Heart left ventricle (tissue), 16 donors: ENCODE measurements at regions of chr22 and their contacts with region 1.

Region 1: GRCh38 chr22:33028234-33028633 is 29.9 kb downstream of the SYN3 start:
- DNase-seq: no peak
- ATAC-seq: no peak
- H3K4me3 ChIP-seq: no peak overlapping the region
- H3K27ac ChIP-seq: no peak overlapping the region
- H3K4me1 ChIP-seq: no peaks in the 10 kb centered on the region
- H3K27me3 ChIP-seq: peaks cover 0 to 25% (median 0%) of the 10 kb centered on the region in 9 donors
- CTCF ChIP-seq: no peak
- POLR2A ChIP-seq: no peak

Region 2: GRCh38 chr22:32880893-32881596 is 147.2 kb before region 1 on chr22:
- intact Hi-C with region 1: no loop called
- DNase-seq: peak; percentile 86 to 94 (median 92)
- ATAC-seq: peak; percentile 96 to 99 (median 98)
- H3K4me3 ChIP-seq: no peak overlapping the region
- H3K27ac ChIP-seq: peak overlapping the region in 11 of 12 donors; percentile 11 to 76 (median 49)
- H3K4me1 ChIP-seq: peaks cover 3 to 25% (median 13%) of the 10 kb centered on the region in 12 donors
- H3K27me3 ChIP-seq: no peaks in the 10 kb centered on the region
- CTCF ChIP-seq: no peak
- POLR2A ChIP-seq: no peak

Region 3: DNA sequence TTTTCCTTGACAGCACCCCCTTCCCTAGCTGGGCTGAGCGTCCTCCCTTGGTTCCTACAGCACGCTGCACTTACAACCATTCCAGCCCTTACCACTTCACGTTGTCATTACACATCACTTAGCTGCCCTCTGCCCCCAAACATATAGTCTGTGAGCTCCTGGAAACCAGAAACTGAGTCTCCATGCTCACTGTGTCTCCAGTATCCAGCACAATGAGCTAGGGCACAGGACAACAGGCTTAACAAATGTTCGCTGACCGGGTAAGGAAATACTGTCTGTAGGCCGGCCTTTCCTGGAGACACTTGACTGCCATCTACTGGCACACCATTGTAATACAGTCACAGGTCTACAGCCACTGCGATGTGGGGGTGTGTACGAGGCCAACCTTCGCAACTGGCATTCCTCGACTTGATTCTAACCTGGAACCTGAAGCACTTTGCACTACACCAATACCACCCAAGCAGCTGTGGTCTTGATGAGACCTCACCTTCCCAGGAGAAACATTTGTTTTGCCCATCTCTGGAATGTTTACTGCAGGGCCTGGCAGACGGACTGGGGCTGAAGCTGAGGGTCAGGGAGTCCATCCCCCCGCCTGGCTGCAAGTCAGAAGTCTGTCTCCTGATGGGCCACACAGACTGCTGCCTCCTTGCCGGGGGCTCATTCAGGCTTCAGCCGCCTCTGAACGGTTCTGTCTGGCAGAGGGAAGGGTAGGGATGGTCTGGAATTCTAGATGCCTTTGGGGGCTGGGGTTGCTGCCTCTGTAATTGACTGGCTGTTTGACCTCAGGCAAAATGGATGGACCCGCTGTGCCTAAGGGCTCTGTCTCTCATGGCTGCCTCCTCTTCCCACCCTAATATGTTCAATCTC is 42.1 kb before region 1 on chr22:
- intact Hi-C with region 1: no loop called
- DNase-seq: peak in 4 of 5 donors; percentile 73 to 82 (median 76)
- ATAC-seq: peak; percentile 87 to 99 (median 97)
- H3K4me3 ChIP-seq: no peak overlapping the region
- H3K27ac ChIP-seq: peak overlapping the region in 1 of 12 donors; percentile 35
- H3K4me1 ChIP-seq: peaks cover 0 to 10% (median 3%) of the 10 kb centered on the region in 12 donors
- H3K27me3 ChIP-seq: no peaks in the 10 kb centered on the region
- CTCF ChIP-seq: peak; percentile 84 to 95 (median 92)
- POLR2A ChIP-seq: no peak

Region 4: GRCh38 chr22:33049119-33049729 is 21.0 kb after region 1 on chr22:
- intact Hi-C with region 1: no loop called
- DNase-seq: peak in 4 of 5 donors; percentile 71 to 82 (median 75)
- ATAC-seq: peak in 3 of 4 donors; percentile 73 to 86 (median 79)
- H3K4me3 ChIP-seq: no peak overlapping the region
- H3K27ac ChIP-seq: no peak overlapping the region
- H3K4me1 ChIP-seq: peaks cover 0 to 5% (median 0%) of the 10 kb centered on the region in 12 donors
- H3K27me3 ChIP-seq: peaks cover 0 to 28% (median 13%) of the 10 kb centered on the region in 9 donors
- CTCF ChIP-seq: peak; percentile 78 to 97 (median 88)
- POLR2A ChIP-seq: no peak

Region 5: DNA sequence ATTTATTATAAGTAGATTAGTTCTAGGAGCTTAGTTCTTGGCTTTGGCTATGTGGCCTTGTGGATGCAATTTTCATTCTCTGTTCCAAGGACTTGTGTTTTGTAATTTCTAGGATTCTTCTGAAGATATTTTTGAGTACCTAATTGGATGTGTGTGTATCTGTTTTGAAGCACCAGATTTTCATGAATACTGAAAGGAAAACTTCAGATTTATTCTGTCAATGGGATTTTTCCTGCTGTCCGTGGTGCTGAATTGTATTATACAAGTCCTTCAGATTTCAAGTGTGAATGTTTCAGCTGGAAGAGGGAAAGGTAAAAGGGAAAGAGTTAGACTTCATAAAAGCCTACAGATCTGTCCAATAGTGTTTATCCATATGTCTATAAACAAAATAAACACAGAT is 48.1 kb after region 1 on chr22:
- intact Hi-C with region 1: no loop called
- DNase-seq: no peak
- ATAC-seq: no peak
- H3K4me3 ChIP-seq: no peak overlapping the region
- H3K27ac ChIP-seq: no peak overlapping the region
- H3K4me1 ChIP-seq: no peaks in the 10 kb centered on the region
- H3K27me3 ChIP-seq: peaks cover 0 to 26% (median 0%) of the 10 kb centered on the region in 9 donors
- CTCF ChIP-seq: no peak
- POLR2A ChIP-seq: no peak

Region 6: GRCh38 chr22:33126881-33127280 is 98.6 kb after region 1 on chr22:
- intact Hi-C with region 1: loop called in 1 of 10 experiments (anchors 10 kb)
- DNase-seq: no peak
- ATAC-seq: no peak
- H3K4me3 ChIP-seq: no peak overlapping the region
- H3K27ac ChIP-seq: no peak overlapping the region
- H3K4me1 ChIP-seq: no peaks in the 10 kb centered on the region
- H3K27me3 ChIP-seq: peaks cover 0 to 8% (median 0%) of the 10 kb centered on the region in 9 donors
- CTCF ChIP-seq: peak in 2 of 12 donors; percentile 11 to 16
- POLR2A ChIP-seq: no peak